Naive thymus-derived CD4-positive, alpha-beta T cell (primary cell): ENCODE measurements at regions of chr15 and their contacts with region 1.

Region 1: DNA sequence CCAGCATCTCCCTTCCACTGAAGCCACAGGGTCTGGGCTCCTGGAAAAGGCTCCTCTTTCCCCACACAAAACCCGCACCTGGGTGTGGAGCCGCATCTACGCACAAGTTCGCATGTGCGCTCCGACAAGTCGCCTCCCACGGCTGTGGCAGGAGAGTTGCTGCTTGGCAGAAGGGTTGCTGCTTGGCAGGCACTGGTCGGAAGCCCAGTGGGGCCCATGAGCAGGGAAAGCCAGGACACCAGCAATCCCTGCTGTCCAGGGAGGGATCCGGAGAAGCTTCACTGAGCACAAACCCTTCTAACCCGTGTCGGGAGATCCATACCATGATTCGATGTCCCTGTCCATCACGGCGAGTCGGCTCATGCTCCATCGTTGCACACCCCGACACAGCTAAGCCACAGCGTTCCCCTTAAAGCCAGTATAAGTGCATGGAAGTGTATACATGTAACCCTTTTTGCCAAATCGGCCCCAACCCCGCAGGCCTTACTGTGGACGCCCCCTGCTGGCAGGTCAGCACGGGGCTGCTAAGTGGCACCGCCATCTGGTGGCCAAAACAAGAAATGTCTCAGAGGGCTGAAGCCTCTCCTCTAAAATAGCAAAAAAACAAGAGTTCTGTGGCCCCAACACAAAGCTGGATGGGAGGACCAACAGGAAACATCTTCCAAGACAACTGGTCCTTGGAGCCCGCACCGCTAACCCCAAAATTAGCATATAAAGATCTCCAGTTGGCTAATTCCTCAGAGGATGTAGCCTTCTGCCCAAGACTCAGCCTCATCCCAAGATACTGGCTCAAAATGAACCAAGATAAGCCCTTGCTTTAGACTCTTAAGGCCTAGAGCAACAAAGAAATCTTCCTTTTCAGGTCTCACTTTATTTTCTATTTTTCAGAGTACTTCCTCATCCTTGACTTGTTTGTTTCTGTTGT is 8.3 kb downstream of the ANKRD63 start:
- DNase-seq: peak; percentile 71 to 95 (median 88)
- ATAC-seq: peak; percentile 94
- H3K4me3 ChIP-seq: no peak overlapping the region
- H3K4me3 Mint-ChIP-seq: peak overlapping the region in 1 of 10 donors; percentile 45
- H3K27ac ChIP-seq: no peak overlapping the region
- H3K27ac Mint-ChIP-seq: peak overlapping the region in 6 of 9 donors; percentile 17 to 70 (median 50)
- H3K4me1 ChIP-seq: peaks cover 0 to 3% of the 10 kb centered on the region in 2 donors
- H3K4me1 Mint-ChIP-seq: peaks cover 0 to 17% (median 5%) of the 10 kb centered on the region in 7 donors
- H3K27me3 ChIP-seq: no peaks in the 10 kb centered on the region
- H3K27me3 Mint-ChIP-seq: peaks cover 12 to 29% (median 16%) of the 10 kb centered on the region in 5 donors

Region 2: GRCh38 chr15:39939487-39939886 is 335.1 kb before region 1 on chr15:
- CTCF ChIA-PET with region 1: no interaction called
- POLR2A ChIA-PET with region 1: no interaction called
- intact Hi-C with region 1: no loop called
- DNase-seq: no peak
- ATAC-seq: no peak
- H3K4me3 ChIP-seq: no peak overlapping the region
- H3K4me3 Mint-ChIP-seq: no peak overlapping the region
- H3K27ac ChIP-seq: no peak overlapping the region
- H3K27ac Mint-ChIP-seq: no peak overlapping the region
- H3K4me1 ChIP-seq: peaks cover 12 to 14% of the 10 kb centered on the region in 2 donors
- H3K4me1 Mint-ChIP-seq: peaks cover 20 to 47% (median 22%) of the 10 kb centered on the region in 7 donors
- H3K27me3 ChIP-seq: no peaks in the 10 kb centered on the region
- H3K27me3 Mint-ChIP-seq: no peaks in the 10 kb centered on the region

Region 3: GRCh38 chr15:40217159-40217824 is 57.3 kb before region 1 on chr15:
- CTCF ChIA-PET with region 1: interaction called, 40 read pairs
- POLR2A ChIA-PET with region 1: no interaction called
- intact Hi-C with region 1: loop called (anchors 1 kb)
- DNase-seq: peak in 7 of 9 donors; percentile 50 to 75 (median 63)
- ATAC-seq: peak; percentile 96
- H3K4me3 ChIP-seq: no peak overlapping the region
- H3K4me3 Mint-ChIP-seq: no peak overlapping the region
- H3K27ac ChIP-seq: no peak overlapping the region
- H3K27ac Mint-ChIP-seq: no peak overlapping the region
- H3K4me1 ChIP-seq: no peaks in the 10 kb centered on the region
- H3K4me1 Mint-ChIP-seq: peaks cover 0 to 2% (median 0%) of the 10 kb centered on the region in 7 donors
- H3K27me3 ChIP-seq: no peaks in the 10 kb centered on the region
- H3K27me3 Mint-ChIP-seq: no peaks in the 10 kb centered on the region

Region 4: GRCh38 chr15:40298216-40298935 is 23.8 kb after region 1 on chr15:
- CTCF ChIA-PET with region 1: interaction called, 11 read pairs
- POLR2A ChIA-PET with region 1: no interaction called
- intact Hi-C with region 1: no loop called
- DNase-seq: no peak
- ATAC-seq: no peak
- H3K4me3 ChIP-seq: no peak overlapping the region
- H3K4me3 Mint-ChIP-seq: no peak overlapping the region
- H3K27ac ChIP-seq: no peak overlapping the region
- H3K27ac Mint-ChIP-seq: no peak overlapping the region
- H3K4me1 ChIP-seq: no peaks in the 10 kb centered on the region
- H3K4me1 Mint-ChIP-seq: peaks cover 0 to 7% (median 0%) of the 10 kb centered on the region in 7 donors
- H3K27me3 ChIP-seq: no peaks in the 10 kb centered on the region
- H3K27me3 Mint-ChIP-seq: no peaks in the 10 kb centered on the region

Region 5: GRCh38 chr15:40338041-40338657 is 63.5 kb after region 1 on chr15:
- CTCF ChIA-PET with region 1: interaction called, 94 read pairs
- POLR2A ChIA-PET with region 1: interaction called, 5 read pairs
- intact Hi-C with region 1: loop called (anchors 1 kb)
- DNase-seq: peak; percentile 61 to 79 (median 76)
- ATAC-seq: peak; percentile 87
- H3K4me3 ChIP-seq: no peak overlapping the region
- H3K4me3 Mint-ChIP-seq: peak overlapping the region in 4 of 10 donors; percentile 37 to 67 (median 48)
- H3K27ac ChIP-seq: no peak overlapping the region
- H3K27ac Mint-ChIP-seq: peak overlapping the region in 4 of 9 donors; percentile 6 to 53 (median 42)
- H3K4me1 ChIP-seq: peaks cover 0 to 16% of the 10 kb centered on the region in 2 donors
- H3K4me1 Mint-ChIP-seq: peaks cover 0 to 22% (median 20%) of the 10 kb centered on the region in 7 donors
- H3K27me3 ChIP-seq: no peaks in the 10 kb centered on the region
- H3K27me3 Mint-ChIP-seq: no peaks in the 10 kb centered on the region

Region 6: GRCh38 chr15:40470423-40471104 is 196.0 kb after region 1 on chr15 and contains the start of gene CHST14:
- CTCF ChIA-PET with region 1: no interaction called
- POLR2A ChIA-PET with region 1: no interaction called
- intact Hi-C with region 1: no loop called
- DNase-seq: peak; percentile 24 to 68 (median 53)
- ATAC-seq: peak; percentile 88
- H3K4me3 ChIP-seq: peak within 1 kb of the TSS; percentile 89
- H3K4me3 Mint-ChIP-seq: peak within 1 kb of the TSS; percentile 90 to 96 (median 92)
- H3K27ac ChIP-seq: peak within 1 kb of the TSS; percentile 81
- H3K27ac Mint-ChIP-seq: peak within 1 kb of the TSS; percentile 80 to 95 (median 87)
- H3K4me1 ChIP-seq: peaks cover 8 to 16% of the 10 kb centered on the region in 2 donors
- H3K4me1 Mint-ChIP-seq: peaks cover 15 to 47% (median 37%) of the 10 kb centered on the region in 7 donors
- H3K27me3 ChIP-seq: no peaks in the 10 kb centered on the region
- H3K27me3 Mint-ChIP-seq: peaks cover 0 to 3% (median 0%) of the 10 kb centered on the region in 5 donors
- total RNA-seq, gene CHST14: 7.3 to 12.5 (median 10.8) TPM